ENCODE measurements at regions of chr17 and their contacts with region 1.

Region 1: DNA sequence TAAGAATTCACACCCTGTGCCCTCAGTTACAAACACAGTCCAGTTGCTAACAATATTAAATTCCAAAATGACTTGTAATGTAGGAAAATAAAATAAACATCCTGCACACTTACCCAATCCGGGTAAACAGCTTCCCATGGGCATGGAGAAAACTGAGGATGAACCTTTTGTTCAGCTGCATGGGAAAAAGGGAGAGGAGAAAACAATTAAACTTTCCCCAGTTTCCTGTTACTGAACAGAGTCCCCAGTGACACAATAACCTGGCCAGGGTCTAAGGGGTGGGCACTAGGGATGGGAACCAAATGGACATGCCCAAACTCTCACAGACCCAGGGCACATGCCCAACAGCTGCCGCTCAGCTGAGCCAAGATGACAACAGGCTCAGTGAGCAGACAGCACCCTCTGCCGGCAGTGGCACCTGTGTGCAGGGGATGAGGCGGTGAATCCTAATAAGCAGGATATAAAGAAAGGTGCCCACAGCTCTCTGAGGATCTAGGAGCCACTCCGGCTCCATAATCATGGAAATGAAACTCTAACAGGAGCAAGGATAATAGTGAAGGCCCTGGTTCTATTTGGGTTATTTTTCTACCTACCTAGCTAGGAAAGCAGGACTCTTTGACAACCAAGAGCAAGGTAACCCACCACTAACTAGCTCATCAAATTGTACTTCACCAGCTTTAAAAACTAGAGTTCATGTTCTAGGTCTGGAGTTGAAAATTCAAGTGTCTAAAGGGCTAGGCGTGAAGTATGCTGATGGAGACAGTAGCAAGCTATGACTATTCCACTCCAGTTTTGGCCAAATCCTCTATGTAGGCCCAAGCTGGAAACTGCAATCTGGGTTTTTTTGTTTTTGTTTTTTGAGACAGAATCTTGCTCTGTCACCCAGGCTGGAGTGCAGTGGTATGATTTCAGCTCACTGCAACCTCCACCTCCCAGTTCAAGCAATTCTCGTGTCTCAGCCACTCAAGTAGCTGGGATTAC is 58.8 kb downstream of the SMG6 start:
- DNase-seq: peak; percentile 76
- H3K4me3 Mint-ChIP-seq: no peak overlapping the region
- H3K27ac Mint-ChIP-seq: no peak overlapping the region
- H3K4me1 Mint-ChIP-seq: no peaks in the 10 kb centered on the region
- H3K27me3 Mint-ChIP-seq: no peaks in the 10 kb centered on the region
- CTCF ChIP-seq: peak; percentile 82

Region 2: GRCh38 chr17:2054512-2055291 is 190.1 kb before region 1 on chr17 and contains the start of gene HIC1:
- CTCF ChIA-PET with region 1: interaction called, 22 read pairs
- intact Hi-C with region 1: loop called (anchors 1 kb)
- DNase-seq: peak; percentile 73
- H3K4me3 Mint-ChIP-seq: peak within 1 kb of the TSS; percentile 60
- H3K27ac Mint-ChIP-seq: no peak within 1 kb of the TSS
- H3K4me1 Mint-ChIP-seq: peaks cover 8% of the 10 kb centered on the region
- H3K27me3 Mint-ChIP-seq: peaks cover 32% of the 10 kb centered on the region
- CTCF ChIP-seq: peak; percentile 41
- total RNA-seq, gene HIC1: 0.61 and 1.2 TPM in 2 replicates